Left colon (tissue), 2 donors: ENCODE measurements at regions of chr4 and their contacts with region 1.

Region 1: DNA sequence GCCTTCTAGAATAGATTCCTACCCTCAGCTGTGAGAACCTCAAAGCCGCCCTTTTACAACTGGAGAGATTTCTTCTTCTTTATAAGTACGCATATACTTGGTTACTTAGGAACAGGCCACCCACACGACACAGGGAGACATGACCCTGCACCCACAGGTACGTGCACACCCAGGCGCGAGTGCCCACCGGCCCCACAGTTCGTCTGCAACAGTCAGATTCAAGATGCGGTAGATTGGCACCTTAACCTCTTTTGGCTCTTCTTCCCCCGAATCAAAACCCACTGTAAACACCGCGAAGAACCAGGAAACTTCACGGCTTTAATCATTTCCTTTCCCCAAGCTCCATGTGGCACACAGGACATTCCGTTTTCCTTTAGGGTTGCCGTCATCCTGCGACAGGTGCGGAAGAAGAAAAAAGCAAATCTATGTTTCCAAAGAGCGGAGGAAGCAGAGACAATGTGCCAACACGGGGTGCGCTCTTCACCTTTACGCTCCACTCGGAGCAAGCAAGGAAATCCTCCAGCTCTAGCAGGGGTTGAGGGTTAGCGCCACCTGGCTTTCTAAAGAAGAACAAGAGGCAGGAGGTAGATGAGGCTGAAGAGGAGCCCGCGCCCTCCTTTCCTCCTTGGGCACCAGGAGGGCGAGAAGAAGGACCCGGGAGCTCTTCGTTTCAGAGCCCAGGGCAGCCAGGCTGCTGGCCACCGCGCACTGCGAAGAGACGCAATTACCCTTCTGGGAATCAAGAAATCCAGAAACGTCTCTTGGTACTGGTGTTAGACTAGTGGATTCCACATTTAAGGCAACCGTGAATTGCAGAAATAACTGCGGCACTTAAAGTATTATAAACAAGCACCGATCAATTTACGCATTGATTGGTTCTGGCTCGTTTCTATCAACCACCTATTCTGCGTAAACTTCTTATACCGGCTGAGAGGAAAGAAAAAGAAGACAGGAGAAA is 35.7 kb downstream of the HAND2 start:
- DNase-seq: peak; percentile 59 to 70
- ATAC-seq: peak; percentile 99

Region 2: DNA sequence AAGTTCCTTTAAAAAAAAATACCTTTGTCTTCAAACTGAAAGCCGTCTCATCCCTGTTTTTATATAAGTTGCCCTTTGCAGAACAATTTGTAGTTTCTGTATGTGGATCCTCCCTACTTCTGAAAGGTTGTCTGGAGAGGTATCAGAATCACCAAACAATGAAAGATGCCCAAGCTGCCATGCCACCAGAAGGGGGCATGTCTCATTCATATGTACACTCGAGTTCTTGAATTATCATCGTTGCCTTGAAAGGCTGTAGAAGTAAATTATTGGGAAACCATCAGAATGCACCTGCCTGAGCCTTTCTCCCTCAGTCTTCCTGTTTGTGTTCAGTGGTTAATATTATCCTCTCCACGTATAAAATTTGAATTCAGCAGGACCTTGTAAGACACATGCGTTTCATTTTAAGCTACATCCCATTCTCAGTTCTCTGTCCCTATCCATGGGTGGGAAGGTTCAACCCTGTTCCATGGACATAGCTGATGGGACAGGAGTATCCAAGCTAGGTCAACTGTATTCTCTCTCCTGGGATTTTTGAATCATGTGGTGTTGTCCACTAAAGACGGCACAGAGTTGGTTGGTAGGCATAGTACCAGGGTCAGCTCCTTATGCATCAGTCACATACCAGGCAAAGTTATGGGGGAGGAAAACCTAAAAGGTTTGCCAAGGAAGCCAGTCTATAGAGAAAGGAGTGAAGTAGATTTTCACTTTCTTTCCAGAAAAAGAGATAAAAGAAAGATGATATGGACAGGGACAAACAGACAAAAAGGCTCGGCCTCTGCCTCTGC is 301.7 kb before region 1 on chr4:
- intact Hi-C with region 1: no loop called
- DNase-seq: no peak
- ATAC-seq: peak; percentile 27

Region 3: DNA sequence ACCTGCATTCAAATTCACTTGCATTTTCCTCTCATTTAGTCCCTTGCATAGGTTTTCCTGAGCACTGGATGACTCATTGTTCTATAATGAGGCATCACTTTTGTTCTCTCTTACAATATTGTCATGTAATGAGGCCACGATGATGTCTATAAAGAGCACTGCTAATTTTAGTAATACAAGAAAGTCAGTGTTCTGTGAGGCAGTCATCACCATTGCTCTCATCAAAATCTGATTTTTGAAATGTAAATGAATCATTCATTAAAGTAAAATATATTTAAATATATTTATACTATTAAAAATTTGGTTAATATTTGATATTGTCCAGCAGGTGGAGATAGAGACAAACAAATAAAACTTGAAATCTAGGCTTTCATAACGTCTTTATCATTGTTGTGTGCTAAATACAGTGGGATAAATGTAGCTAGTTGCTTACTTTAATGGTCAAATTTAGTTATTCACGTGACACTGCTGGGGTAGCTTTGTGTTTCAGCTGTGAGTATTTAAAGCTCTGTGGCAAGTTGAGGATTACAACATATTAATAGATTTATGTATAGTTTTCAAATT is 175.6 kb before region 1 on chr4:
- intact Hi-C with region 1: loop called in 1 of 2 experiments (anchors 10 kb)
- DNase-seq: no peak
- ATAC-seq: no peak